Lower leg skin (tissue), 4 donors: ENCODE measurements at regions of chr4 and their contacts with region 1.

Region 1: DNA sequence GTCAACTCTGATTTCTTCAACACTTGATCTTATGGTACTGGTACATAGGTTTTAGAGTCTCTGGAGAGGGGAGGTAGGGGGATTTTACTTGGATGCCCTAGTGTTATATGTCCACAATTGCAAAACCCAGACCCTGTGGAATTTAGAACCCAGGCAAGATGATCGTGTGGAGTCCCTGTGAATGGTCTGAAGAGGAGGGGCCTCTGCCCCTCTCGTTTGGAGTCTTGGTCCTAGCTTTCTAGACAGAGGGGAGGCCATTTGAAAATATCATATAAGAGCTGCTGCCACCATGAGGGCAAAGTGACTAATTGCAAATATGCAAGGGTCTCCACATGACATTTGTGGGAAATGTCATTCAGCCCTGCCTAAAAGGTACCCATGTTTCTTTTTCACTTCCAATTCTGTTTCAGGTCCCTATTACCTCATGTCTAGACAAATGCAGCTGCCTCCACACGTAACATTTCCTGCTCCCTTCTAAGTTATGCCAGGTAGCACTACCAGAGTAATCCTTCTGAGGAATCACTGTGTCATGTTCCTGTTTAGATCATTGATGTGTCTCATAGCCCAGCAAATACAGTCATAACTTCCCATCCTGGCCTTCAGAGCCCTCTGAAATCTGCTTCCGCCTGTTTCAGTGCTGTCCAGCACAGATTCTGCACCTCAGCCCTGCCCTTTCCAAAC is 126.8 kb downstream of the KLHL8 start:
- DNase-seq: no peak
- H3K4me3 ChIP-seq: no peak overlapping the region
- CTCF ChIP-seq: peak in 1 of 3 donors; percentile 18
- POLR2A ChIP-seq: no peak

Region 2: GRCh38 chr4:86927843-86928395 is 165.7 kb before region 1 on chr4:
- intact Hi-C with region 1: loop called (anchors 10 kb)
- DNase-seq: peak; percentile 80 to 84
- H3K4me3 ChIP-seq: no peak overlapping the region
- CTCF ChIP-seq: no peak
- POLR2A ChIP-seq: no peak

Region 3: GRCh38 chr4:86977621-86978184 is 115.9 kb before region 1 on chr4:
- intact Hi-C with region 1: no loop called
- DNase-seq: peak in 1 of 2 donors; percentile 54
- H3K4me3 ChIP-seq: no peak overlapping the region
- CTCF ChIP-seq: no peak
- POLR2A ChIP-seq: no peak

Region 4: DNA sequence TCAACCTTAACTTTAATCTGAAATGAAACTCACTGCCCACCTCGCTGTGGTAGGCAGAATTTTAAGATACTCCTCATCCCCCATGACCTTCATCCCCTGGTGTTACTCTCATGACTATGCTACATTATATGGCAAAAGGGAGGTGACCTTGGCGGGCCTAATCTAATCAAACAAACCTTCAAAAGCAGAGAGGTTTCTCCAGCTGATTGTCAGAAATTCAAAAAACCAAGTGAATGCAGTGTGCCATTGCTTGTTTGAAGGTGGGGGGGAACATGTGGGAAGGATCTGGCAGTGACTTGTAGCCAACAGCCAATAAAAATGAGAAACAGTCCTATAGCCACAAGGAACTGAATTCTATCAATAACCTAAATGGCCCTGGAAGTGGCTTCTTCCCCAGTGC is 78.4 kb after region 1 on chr4:
- intact Hi-C with region 1: no loop called
- DNase-seq: no peak
- H3K4me3 ChIP-seq: no peak overlapping the region
- CTCF ChIP-seq: no peak
- POLR2A ChIP-seq: no peak